Activated naive CD4-positive, alpha-beta T cell treated with anti-CD3 and anti-CD28 coated beads for 36 hours (primary cell): ENCODE measurements at regions of chr6 and their contacts with region 1.

Region 1: DNA sequence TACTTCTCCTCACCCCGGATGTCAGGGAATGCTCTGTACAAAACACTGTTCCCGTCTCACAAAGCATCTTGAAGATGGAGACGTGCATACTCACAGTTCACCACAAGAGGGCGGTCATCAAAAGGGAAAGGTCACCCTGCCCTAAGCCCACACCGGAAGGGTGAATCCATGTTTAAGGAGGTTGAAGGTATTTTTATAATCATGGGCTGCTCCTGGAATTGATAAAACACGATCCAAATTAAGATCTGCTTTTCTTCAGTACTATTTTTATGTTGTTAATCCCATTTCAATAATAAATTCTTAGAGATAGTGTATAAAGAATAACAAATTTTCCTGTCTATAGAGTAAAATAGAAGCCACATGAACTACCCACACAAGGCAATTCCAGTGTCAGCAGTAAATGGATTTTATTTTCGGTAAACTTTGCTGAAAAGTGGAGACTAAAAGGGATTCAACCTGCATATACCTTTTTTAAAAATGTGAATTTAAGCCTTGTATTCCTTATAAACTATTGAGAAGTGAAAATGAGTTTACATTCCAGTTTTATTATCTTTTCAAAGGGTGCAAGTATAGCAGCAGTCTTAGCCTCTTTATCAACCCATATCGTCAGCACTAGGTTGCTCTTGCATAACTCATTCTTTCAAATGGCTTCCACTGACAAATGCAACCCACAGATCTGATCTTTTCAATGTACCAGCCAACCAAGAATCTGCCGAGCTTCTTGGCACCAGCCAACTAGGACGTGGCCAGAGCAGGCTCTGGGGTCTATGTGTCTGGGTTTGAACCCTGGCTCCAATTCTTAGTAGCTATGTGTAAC is 79.7 kb upstream of the MBOAT1 start:
- DNase-seq: peak; percentile 90
- H3K4me3 Mint-ChIP-seq: no peak overlapping the region
- H3K27ac Mint-ChIP-seq: no peak overlapping the region
- H3K4me1 Mint-ChIP-seq: peaks cover 16% of the 10 kb centered on the region
- H3K27me3 Mint-ChIP-seq: no peaks in the 10 kb centered on the region

Region 2: GRCh38 chr6:19911223-19911622 is 380.7 kb before region 1 on chr6:
- CTCF ChIA-PET with region 1: no interaction called
- intact Hi-C with region 1: no loop called
- DNase-seq: no peak
- H3K4me3 Mint-ChIP-seq: no peak overlapping the region
- H3K27ac Mint-ChIP-seq: no peak overlapping the region
- H3K4me1 Mint-ChIP-seq: no peaks in the 10 kb centered on the region
- H3K27me3 Mint-ChIP-seq: peaks cover 2% of the 10 kb centered on the region

Region 3: DNA sequence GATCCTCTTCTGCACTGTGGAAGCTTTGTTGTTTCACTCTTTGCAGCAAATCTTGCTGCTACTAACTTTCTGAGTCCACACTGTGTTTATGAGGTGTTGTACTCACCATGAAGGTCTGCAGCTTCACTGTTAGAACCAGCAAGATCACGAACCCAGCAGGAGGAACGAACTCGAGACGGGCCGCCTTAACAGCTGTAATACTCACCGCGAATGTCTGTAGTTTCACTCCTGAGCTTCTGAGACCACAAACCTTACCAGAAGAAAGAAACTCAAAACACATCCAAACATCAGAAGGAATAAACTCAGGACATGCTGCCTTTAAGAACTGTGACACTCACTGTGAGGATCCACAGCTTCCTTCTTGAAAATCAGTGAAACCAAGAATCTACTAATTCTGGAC is 31.6 kb before region 1 on chr6:
- CTCF ChIA-PET with region 1: no interaction called
- intact Hi-C with region 1: no loop called
- DNase-seq: no peak
- H3K4me3 Mint-ChIP-seq: no peak overlapping the region
- H3K27ac Mint-ChIP-seq: no peak overlapping the region
- H3K4me1 Mint-ChIP-seq: no peaks in the 10 kb centered on the region
- H3K27me3 Mint-ChIP-seq: peaks cover 4% of the 10 kb centered on the region

Region 4: DNA sequence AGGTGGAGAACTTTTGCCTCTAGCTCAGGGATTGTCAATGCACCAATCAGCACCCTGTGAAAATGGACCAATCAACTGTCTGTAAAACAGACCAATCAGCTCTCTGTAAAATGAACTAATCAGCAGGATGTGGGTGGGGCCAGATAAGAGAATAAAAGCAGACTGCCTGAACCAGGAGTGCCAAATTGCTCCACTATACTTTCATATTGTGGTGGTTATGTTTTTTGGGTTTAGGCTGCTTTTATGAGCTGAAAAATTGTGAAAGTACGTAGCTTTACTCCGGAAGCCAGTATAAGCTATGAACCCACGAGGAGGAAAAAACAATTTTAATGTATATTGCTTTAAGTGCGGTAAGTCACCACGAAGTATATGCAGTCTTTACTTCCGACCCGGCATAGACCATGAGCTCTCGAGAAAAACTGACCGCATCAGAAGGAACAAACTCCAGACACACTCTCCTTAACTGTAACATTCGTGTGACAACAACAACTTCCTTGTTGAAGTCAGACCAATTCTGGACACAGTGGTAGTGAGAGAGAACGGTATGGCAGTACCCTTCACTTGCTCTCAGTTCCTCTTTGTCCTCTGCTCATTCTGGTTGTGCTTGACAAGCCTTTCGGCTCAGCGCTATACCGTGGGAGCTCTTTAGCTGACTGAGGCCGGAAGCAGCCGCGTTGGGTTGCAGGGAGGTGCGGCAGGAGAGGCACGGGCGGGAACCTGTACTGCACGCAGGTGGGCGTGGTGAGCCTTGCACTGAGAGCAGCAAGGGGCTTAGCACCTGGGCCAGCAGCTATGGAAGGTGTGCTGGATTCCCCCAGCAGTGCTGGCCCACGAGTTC is 27.8 kb after region 1 on chr6:
- CTCF ChIA-PET with region 1: interaction called, 3 read pairs
- intact Hi-C with region 1: loop called (anchors 1 kb)
- DNase-seq: peak; percentile 83
- H3K4me3 Mint-ChIP-seq: peak overlapping the region; percentile 81
- H3K27ac Mint-ChIP-seq: peak overlapping the region; percentile 96
- H3K4me1 Mint-ChIP-seq: peaks cover 14% of the 10 kb centered on the region
- H3K27me3 Mint-ChIP-seq: no peaks in the 10 kb centered on the region

Region 5: GRCh38 chr6:20534295-20535262 is 242.6 kb after region 1 on chr6 and contains the start of gene CDKAL1:
- CTCF ChIA-PET with region 1: interaction called, 10 read pairs
- intact Hi-C with region 1: no loop called
- DNase-seq: peak; percentile 96
- H3K4me3 Mint-ChIP-seq: peak within 1 kb of the TSS; percentile 95
- H3K27ac Mint-ChIP-seq: peak within 1 kb of the TSS; percentile 94
- H3K4me1 Mint-ChIP-seq: peaks cover 33% of the 10 kb centered on the region
- H3K27me3 Mint-ChIP-seq: no peaks in the 10 kb centered on the region
- total RNA-seq, gene CDKAL1: 20.4 TPM